ENCODE measurements at regions of chr10 and their contacts with region 1.

Region 1: DNA sequence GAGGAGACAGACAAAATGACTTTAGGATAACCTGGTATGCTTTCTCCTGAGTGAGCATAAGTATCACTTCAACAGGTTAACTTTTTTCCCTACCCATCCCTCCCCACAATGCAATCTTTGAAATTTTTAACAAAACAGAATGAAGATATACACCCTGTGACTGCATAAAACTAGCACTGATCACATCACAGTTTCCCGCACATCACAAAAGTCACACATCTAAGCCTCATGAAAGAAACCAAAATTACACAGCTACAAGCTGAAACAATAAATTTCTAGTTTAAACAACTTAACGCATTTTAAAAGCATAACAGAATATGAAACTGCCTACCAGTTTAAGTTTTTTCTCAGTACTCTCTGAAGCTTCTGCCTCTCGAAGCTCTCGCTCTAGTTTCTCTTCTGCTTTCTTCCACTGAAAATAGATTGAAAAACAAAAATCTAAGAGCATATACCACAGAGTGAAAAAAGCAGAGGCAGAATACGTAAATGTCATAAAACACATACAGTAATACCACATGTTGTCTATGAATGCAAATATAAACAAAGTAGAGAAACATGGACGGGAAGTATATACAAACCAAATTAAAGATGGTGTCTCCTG is 18.1 kb downstream of the NOC3L start:
- DNase-seq: peak; percentile 55
- H3K4me3 ChIP-seq: peak overlapping the region; percentile 18
- H3K27ac ChIP-seq: peak overlapping the region; percentile 44
- H3K4me1 ChIP-seq: peaks cover 23% of the 10 kb centered on the region
- CTCF ChIP-seq: no peak

Region 2: GRCh38 chr10:94362360-94363250 is 18.0 kb after region 1 on chr10 and contains the start of gene NOC3L:
- CTCF ChIA-PET with region 1: no interaction called
- POLR2A ChIA-PET with region 1: interaction called, 11 read pairs
- intact Hi-C with region 1: no loop called
- DNase-seq: peak; percentile 96
- H3K4me3 ChIP-seq: peak within 1 kb of the TSS; percentile 98
- H3K27ac ChIP-seq: peak within 1 kb of the TSS; percentile 47
- H3K4me1 ChIP-seq: peaks cover 17% of the 10 kb centered on the region
- CTCF ChIP-seq: peak; percentile 78
- total RNA-seq, gene NOC3L: 31.6 and 38.5 TPM in 2 replicates

Region 3: DNA sequence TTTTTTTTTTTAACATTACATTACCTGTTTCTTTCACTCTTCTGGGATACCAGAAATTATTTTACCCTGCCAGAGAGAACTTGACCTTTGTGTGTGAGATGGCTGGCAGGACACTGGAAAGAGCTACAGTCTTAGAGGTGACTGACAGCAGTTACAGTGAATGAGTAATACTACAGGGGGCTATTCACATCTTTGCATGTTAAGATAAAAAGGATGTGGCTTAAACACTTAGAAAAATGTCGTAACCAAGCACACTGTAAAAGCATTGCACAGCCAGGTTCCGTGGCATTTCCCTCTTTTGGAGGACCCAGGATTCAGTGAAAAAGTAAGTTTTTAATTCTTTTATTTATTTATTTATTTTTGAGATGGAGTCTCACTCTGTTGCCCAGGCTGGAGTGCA is 38.9 kb after region 1 on chr10:
- CTCF ChIA-PET with region 1: no interaction called
- POLR2A ChIA-PET with region 1: no interaction called
- intact Hi-C with region 1: no loop called
- DNase-seq: no peak
- H3K4me3 ChIP-seq: no peak overlapping the region
- H3K27ac ChIP-seq: no peak overlapping the region
- H3K4me1 ChIP-seq: no peaks in the 10 kb centered on the region
- CTCF ChIP-seq: no peak

Region 4: GRCh38 chr10:94412449-94412848 is 67.8 kb after region 1 on chr10:
- CTCF ChIA-PET with region 1: no interaction called
- POLR2A ChIA-PET with region 1: no interaction called
- intact Hi-C with region 1: no loop called
- DNase-seq: no peak
- H3K4me3 ChIP-seq: no peak overlapping the region
- H3K27ac ChIP-seq: no peak overlapping the region
- H3K4me1 ChIP-seq: no peaks in the 10 kb centered on the region
- CTCF ChIP-seq: no peak

Region 5: DNA sequence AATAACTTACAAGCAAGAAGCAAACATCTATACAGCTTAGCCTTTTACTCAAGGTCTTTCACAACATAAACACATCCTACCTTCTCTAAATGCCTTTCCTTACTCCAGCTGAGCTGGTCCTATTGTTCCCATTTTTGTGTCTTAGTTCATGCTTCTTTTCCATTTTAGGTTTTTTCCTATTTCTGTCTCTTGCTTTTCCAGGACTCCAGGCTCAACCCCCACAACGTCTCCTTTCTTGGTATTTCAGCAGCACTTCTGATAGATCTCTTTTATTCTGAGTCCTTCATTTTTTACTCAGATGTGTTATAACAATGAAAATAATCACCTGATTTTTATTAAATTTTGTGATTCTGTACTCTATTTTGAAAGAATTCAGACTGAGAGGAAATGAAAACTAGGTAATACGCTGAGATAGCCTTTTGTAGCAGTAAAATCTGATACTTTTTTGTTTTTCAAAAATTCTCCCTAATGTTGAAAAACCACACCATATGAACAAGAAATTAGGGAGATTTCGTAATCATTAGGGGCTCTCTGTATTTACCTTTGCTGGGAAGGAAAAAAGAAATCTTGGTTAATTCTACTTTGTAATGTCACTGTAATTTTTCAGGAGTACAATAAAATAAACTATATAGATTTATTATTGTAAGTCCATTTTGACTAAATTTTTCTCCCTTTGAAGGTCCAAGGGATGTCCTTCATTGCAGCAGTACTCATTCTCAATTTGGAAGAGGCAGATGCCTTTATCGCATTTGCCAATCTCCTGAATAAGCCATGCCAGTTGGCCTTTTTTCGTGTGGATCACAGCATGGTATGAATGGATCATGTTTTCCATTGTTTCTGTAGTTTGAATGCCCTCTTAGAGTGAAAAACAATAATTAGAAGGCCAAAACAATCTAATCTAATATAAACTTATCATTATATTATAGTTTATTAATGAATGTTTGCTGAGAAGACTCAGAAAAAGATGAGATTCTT is 176.9 kb after region 1 on chr10:
- CTCF ChIA-PET with region 1: no interaction called
- POLR2A ChIA-PET with region 1: no interaction called
- intact Hi-C with region 1: no loop called
- DNase-seq: no peak
- H3K4me3 ChIP-seq: no peak overlapping the region
- H3K27ac ChIP-seq: no peak overlapping the region
- H3K4me1 ChIP-seq: no peaks in the 10 kb centered on the region
- CTCF ChIP-seq: no peak

Region 6: GRCh38 chr10:94545391-94546048 is 200.9 kb after region 1 on chr10 and contains the start of gene HELLS:
- CTCF ChIA-PET with region 1: no interaction called
- POLR2A ChIA-PET with region 1: interaction called, 3 read pairs
- intact Hi-C with region 1: loop called (anchors 10 kb)
- DNase-seq: peak; percentile 93
- H3K4me3 ChIP-seq: peak within 1 kb of the TSS; percentile 91
- H3K27ac ChIP-seq: peak within 1 kb of the TSS; percentile 59
- H3K4me1 ChIP-seq: peaks cover 14% of the 10 kb centered on the region
- CTCF ChIP-seq: no peak
- total RNA-seq, gene HELLS: 204 and 233 TPM in 2 replicates